IMR-90 (cell line): ENCODE measurements at regions of chr6 and their contacts with region 1.

Region 1: GRCh38 chr6:1812487-1812886 is 202.8 kb downstream of the FOXC1 start:
- DNase-seq: no peak
- ATAC-seq: no peak
- H3K4me3 ChIP-seq: no peak overlapping the region
- H3K27ac ChIP-seq: no peak overlapping the region
- H3K4me1 ChIP-seq: peaks cover 3% of the 10 kb centered on the region
- H3K27me3 ChIP-seq: no peaks in the 10 kb centered on the region
- CTCF ChIP-seq: no peak
- POLR2A ChIP-seq: no peak
- RAD21 ChIP-seq: no peak

Region 2: DNA sequence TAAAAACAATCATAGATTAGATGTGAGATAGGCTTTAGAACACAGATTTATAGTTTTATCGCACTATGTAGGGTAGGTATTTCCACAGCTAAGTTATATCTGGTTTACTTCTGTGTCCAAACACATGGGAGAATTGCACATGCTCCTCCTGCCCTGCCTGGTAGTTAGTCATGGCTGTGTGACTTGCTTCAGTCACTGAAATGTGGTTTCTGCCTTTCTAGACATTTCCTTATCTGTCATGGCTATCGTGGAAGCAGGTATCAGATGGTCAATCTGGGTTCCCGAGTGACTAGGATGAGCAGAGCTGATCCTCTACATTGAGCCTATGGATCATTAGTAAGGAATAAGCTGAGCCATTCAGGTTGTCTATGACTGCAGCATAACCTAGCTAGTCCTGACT is 550.7 kb after region 1 on chr6:
- CTCF ChIA-PET with region 1: interaction called, 13 read pairs
- POLR2A ChIA-PET with region 1: no interaction called
- dilution Hi-C with region 1: no loop called
- in situ Hi-C with region 1: no loop called
- intact Hi-C with region 1: no loop called
- DNase-seq: peak; percentile 12
- ATAC-seq: no peak
- H3K4me3 ChIP-seq: no peak overlapping the region
- H3K27ac ChIP-seq: no peak overlapping the region
- H3K4me1 ChIP-seq: peaks cover 2% of the 10 kb centered on the region; the same call in 1 of the 2 replicates
- H3K27me3 ChIP-seq: no peaks in the 10 kb centered on the region
- CTCF ChIP-seq: no peak
- POLR2A ChIP-seq: no peak
- RAD21 ChIP-seq: no peak